ENCODE measurements at regions of chr22 and their contacts with region 1.

Region 1: GRCh38 chr22:46408568-46409506 is 73.3 kb downstream of the TRMU start:
- DNase-seq: peak in 1 of 5 donors; percentile 50
- ATAC-seq: no peak
- H3K4me3 ChIP-seq: no peak overlapping the region
- H3K27ac ChIP-seq: no peak overlapping the region
- H3K4me1 ChIP-seq: peaks cover 0 to 11% (median 0%) of the 10 kb centered on the region in 12 donors
- H3K27me3 ChIP-seq: no peaks in the 10 kb centered on the region
- CTCF ChIP-seq: no peak
- POLR2A ChIP-seq: no peak

Region 2: GRCh38 chr22:46201059-46201757 is 207.6 kb before region 1 on chr22:
- intact Hi-C with region 1: no loop called
- DNase-seq: no peak
- ATAC-seq: peak in 3 of 4 donors; percentile 61 to 70 (median 63)
- H3K4me3 ChIP-seq: no peak overlapping the region
- H3K27ac ChIP-seq: peak overlapping the region in 3 of 12 donors; percentile 5 to 36 (median 22)
- H3K4me1 ChIP-seq: peaks cover 0 to 30% (median 9%) of the 10 kb centered on the region in 12 donors
- H3K27me3 ChIP-seq: no peaks in the 10 kb centered on the region
- CTCF ChIP-seq: no peak
- POLR2A ChIP-seq: no peak

Region 3: DNA sequence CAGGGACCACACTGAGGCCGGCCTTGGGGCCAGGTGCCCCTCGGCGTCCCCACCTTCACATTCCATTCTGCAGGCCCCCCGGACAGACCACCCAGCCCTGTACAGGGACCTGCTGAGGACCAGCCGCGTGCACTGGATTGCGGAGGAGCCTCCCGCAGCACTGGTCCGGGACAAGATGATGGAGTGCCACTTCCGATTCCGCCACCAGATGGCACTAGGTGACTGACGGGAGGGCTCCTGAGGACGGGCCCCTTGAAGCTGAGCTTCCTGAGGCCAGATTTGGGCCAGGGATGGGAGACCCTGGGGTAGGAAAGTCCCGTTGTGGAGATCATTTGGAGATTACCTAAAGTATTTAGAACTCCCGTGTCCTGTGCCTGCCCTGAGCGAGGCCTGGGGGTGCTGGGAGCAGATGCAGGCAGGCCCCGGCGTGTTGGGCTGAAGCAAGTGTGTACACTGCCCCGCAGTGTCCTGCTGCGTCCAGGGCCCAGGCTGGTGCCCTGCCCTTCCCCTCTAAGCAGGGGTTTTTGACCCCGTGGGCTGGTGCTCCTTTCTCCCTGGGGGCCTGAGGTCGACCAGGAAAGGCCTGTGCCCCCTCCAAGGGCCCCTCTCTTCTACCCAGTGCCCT is 53.4 kb before region 1 on chr22:
- intact Hi-C with region 1: loop called in 1 of 10 experiments (anchors 10 kb)
- DNase-seq: peak; percentile 62 to 74 (median 71)
- ATAC-seq: peak; percentile 11 to 49 (median 18)
- H3K4me3 ChIP-seq: no peak overlapping the region
- H3K27ac ChIP-seq: peak overlapping the region in 4 of 12 donors; percentile 20 to 94 (median 57)
- H3K4me1 ChIP-seq: peaks cover 0 to 47% (median 17%) of the 10 kb centered on the region in 12 donors
- H3K27me3 ChIP-seq: no peaks in the 10 kb centered on the region
- CTCF ChIP-seq: peak; percentile 58 to 83 (median 73)
- POLR2A ChIP-seq: no peak

Region 4: DNA sequence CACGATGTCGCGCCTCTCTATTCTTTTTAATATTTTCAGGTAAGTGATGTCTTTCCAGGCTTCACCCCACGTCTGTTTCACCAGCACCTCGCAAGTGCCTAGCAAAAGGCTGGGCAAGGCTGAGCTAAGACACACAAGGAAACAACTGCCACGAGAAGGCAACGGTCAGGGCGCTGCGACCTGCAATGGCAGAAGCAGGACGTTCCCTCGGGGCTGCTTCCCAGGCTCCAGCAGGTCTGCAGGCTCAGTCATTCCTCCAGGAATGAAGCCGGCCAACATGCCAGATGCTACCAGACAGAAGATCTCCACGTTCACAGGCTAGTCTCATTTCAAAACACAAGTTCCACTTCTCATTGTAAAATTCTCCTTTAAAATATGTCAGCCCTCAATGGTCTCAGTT is 83.1 kb after region 1 on chr22:
- intact Hi-C with region 1: no loop called
- DNase-seq: no peak
- ATAC-seq: no peak
- H3K4me3 ChIP-seq: no peak overlapping the region
- H3K27ac ChIP-seq: no peak overlapping the region
- H3K4me1 ChIP-seq: peaks cover 0 to 7% (median 0%) of the 10 kb centered on the region in 12 donors
- H3K27me3 ChIP-seq: no peaks in the 10 kb centered on the region
- CTCF ChIP-seq: no peak
- POLR2A ChIP-seq: no peak

Measured in heart left ventricle (tissue), 16 donors.